Activated CD8-positive, alpha-beta T cell treated with anti-CD3 and anti-CD28 coated beads for 36 hours (primary cell): ENCODE measurements at regions of chr17 and their contacts with region 1.

Region 1: DNA sequence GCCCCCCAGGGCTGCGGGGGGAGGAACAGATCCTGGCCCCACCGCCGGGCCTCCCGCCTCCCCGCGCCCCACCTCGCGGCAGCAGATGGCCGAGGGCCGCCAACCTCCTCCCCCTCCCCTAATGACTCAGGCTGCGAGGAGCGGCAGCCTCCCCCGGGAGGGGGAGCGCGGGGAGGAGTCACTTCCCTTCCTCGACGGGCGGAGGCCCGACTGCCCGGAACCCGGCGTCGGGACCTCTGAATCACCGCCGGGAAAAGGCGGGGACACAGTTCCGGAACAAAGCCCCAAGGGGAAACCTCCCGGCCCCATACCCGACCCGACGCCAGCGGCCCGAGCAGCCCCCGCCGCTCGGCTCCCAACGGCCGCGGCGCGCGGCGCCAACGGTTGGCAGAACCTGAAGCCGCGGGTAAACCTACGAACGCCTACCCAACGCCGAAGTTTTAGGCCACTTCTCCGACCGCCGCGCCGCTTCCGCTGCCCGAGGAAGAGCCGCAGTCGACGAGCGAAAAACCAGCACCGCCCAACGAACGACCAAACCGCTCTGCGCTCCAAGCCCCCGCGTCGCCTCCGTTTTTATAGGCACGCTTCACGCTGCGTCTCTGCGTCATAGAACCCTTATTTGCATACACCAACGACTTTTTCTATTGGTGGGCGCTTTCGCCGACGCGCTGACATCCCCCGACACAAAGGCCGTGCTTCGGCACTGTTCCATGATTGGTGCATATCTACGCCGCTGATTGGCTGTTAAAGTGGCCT is 5.2 kb upstream of the UNK start:
- DNase-seq: peak; percentile 96
- ATAC-seq: peak; percentile 69
- H3K4me3 Mint-ChIP-seq: peak overlapping the region; percentile 88
- H3K27ac Mint-ChIP-seq: peak overlapping the region; percentile 95
- H3K4me1 Mint-ChIP-seq: peaks cover 43% of the 10 kb centered on the region
- H3K27me3 Mint-ChIP-seq: peaks cover 2% of the 10 kb centered on the region
- CTCF ChIP-seq: no peak

Region 2: DNA sequence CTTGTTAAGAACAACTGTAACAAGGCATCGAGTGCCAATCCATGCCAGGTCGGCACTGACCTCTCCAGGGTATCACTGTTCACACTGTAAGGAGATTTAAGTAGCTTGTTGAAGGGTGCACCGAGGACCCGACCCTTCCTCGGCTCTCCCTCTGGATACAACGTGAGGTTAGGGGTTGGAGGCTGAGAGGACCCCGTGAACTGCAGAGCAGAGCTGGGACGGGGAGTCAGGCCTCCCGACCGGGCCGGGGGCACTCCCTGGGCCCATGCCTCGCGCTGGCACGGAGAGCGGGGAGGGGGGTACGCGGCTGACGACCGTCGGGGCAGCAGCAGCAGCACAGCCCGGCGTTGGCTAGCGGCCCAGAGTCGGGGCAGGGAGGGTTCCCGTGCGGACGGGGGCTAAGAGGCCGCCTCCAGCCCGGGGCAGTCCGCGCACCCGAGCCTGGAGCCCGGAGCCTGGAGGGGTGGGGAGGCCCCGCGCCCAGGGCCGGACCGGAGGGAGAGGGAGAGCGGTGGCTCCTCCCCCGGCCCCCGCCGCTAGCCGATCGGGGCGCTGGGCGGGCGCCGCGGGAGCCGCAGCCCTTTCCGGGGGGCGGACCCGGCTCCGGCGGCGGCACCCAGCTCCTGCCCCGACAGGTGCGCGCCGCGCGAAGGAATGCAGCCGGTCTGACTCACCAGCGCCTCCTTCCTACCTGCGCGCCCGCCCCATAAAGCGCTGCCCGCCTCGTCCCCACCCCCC is 58.5 kb before region 1 on chr17 and contains the start of gene ITGB4:
- CTCF ChIA-PET with region 1: no interaction called
- POLR2A ChIA-PET with region 1: no interaction called
- intact Hi-C with region 1: no loop called
- DNase-seq: peak; percentile 63
- ATAC-seq: peak; percentile 93
- H3K4me3 Mint-ChIP-seq: peak within 1 kb of the TSS; percentile 67
- H3K27ac Mint-ChIP-seq: no peak within 1 kb of the TSS
- H3K4me1 Mint-ChIP-seq: peaks cover 3% of the 10 kb centered on the region
- H3K27me3 Mint-ChIP-seq: peaks cover 9% of the 10 kb centered on the region
- CTCF ChIP-seq: peak; percentile 14
- total RNA-seq, gene ITGB4: 0.69 to 1.8 TPM

Region 3: GRCh38 chr17:75764711-75765421 is 14.5 kb before region 1 on chr17 and contains the start of gene GALK1:
- CTCF ChIA-PET with region 1: interaction called, 40 read pairs
- POLR2A ChIA-PET with region 1: interaction called, 215 read pairs
- intact Hi-C with region 1: no loop called
- DNase-seq: peak; percentile 81
- ATAC-seq: peak; percentile 96
- H3K4me3 Mint-ChIP-seq: peak within 1 kb of the TSS; percentile 79
- H3K27ac Mint-ChIP-seq: peak within 1 kb of the TSS; percentile 78
- H3K4me1 Mint-ChIP-seq: peaks cover 10% of the 10 kb centered on the region
- H3K27me3 Mint-ChIP-seq: no peaks in the 10 kb centered on the region
- CTCF ChIP-seq: peak; percentile 78
- total RNA-seq, gene GALK1: 43.4 to 50.7 TPM

Region 4: DNA sequence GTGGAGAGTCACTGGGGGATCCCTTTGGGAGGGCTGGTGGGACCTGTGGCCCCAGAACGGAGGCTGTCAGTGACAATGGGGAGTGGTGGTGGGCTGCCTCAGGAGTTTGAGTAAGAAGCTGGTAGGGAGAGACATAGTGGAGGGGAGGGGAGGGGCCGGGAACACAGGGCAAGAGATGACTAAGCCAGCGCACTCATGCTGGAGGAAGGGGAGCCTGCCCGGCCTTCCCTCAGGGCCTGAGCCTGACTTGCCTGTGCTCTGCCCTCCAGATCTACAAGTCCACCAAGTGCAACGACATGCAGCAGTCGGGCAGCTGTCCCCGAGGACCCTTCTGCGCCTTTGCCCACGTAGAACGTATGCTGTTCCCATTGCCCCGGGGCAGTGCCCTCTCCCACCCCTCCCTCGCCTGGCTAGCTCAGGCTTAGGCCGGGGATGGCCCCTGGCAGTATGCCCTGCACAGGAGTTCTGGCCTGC is 35.5 kb after region 1 on chr17:
- CTCF ChIA-PET with region 1: interaction called, 5 read pairs
- POLR2A ChIA-PET with region 1: interaction called, 11 read pairs
- intact Hi-C with region 1: no loop called
- DNase-seq: no peak
- ATAC-seq: no peak
- H3K4me3 Mint-ChIP-seq: no peak overlapping the region
- H3K27ac Mint-ChIP-seq: no peak overlapping the region
- H3K4me1 Mint-ChIP-seq: no peaks in the 10 kb centered on the region
- H3K27me3 Mint-ChIP-seq: no peaks in the 10 kb centered on the region
- CTCF ChIP-seq: no peak

Region 5: GRCh38 chr17:75855310-75856081 is 76.1 kb after region 1 on chr17 and contains the start of gene WBP2:
- CTCF ChIA-PET with region 1: interaction called, 16 read pairs
- POLR2A ChIA-PET with region 1: interaction called, 14 read pairs
- intact Hi-C with region 1: no loop called
- DNase-seq: peak; percentile 100
- ATAC-seq: peak; percentile 93
- H3K4me3 Mint-ChIP-seq: no peak within 1 kb of the TSS
- H3K27ac Mint-ChIP-seq: peak within 1 kb of the TSS; percentile 92
- H3K4me1 Mint-ChIP-seq: peaks cover 33% of the 10 kb centered on the region
- H3K27me3 Mint-ChIP-seq: no peaks in the 10 kb centered on the region
- CTCF ChIP-seq: peak; percentile 53
- total RNA-seq, gene WBP2: 54.4 to 58.5 TPM

Region 6: DNA sequence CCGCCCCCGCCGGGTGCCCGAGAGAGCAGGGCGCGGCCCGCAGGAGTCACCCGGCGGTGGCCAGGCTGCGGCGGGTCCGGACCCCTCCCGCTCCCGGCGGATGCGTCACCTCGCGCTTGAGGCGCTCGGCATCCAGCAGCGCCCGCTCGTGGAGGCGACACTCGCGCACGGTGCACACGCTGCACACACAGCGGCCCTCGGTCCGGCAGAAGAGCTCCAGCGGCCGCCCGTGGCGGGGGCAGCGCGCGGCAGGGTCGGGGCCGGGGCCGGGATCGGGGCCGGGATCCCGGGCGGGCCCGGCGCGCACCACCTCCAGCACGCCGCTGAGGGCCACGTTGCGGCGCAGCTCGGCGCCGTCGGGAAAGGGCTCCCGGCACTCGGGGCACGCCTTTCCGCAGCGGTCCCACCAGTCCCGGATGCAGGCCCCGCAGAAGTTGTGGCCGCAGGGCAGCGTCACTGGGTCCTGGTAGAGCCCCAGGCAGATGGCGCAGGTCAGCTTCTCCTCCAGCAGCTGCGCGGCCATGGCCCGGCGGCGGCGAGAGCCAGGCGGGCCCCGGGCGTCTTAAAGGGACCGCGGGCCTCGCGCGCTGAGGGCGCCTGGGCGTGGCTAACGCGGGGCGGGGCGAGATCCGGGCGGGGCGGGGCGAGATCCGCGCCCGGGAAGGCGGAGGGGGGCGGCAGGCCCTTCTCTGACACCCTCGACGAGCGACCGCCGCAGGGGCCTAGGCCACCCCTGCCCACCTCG is 117.2 kb after region 1 on chr17 and contains the start of gene TRIM65:
- CTCF ChIA-PET with region 1: interaction called, 3 read pairs
- POLR2A ChIA-PET with region 1: interaction called, 11 read pairs
- intact Hi-C with region 1: no loop called
- DNase-seq: peak; percentile 85
- ATAC-seq: peak; percentile 88
- H3K4me3 Mint-ChIP-seq: peak within 1 kb of the TSS; percentile 87
- H3K27ac Mint-ChIP-seq: peak within 1 kb of the TSS; percentile 88
- H3K4me1 Mint-ChIP-seq: peaks cover 21% of the 10 kb centered on the region
- H3K27me3 Mint-ChIP-seq: no peaks in the 10 kb centered on the region
- CTCF ChIP-seq: peak; percentile 17
- total RNA-seq, gene TRIM65: 37.1 to 42.2 TPM